GM12878 (cell line): ENCODE measurements at regions of chr1 and their contacts with region 1.

Region 1: DNA sequence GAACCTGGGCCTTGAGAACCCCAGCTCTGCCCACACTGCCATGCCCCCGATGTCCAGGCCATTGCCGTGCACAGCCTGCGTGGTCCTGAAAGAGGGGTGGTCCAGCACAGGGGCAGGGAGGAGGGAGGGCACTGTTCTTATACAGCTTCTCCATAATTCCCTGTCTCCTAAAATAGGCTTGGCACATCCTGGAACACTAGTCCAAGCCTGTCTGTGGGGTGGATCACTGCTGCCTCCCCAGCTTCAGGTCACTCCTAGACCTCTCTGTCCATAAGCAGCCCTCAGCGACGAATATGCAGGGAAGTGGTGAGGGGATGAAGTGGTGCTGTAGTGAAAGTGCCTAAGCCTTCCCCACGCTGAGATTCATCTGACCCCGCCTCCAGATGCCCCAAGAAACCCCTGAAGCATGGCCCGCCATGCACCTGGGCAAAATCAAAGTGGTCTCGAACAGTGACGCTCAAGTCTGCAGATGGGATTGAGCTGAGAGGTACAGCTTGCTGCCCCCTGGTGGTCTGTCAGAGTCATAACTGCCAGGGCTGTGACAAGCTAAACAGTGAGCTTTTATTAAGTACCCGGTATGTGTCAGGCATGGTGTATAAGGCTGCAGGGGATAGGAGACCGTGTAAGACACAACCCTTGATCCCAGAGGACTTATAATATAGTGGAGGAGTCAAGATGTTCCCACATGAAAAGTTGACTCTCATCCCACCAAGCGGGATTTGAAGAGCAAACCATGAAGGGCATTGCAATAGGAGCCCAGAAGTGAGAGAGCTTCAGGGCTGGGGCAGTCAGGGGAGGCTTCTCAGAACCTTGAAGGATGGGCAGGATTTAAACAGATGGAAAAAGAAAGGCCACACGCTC is 66.6 kb downstream of the FAM163A start:
- DNase-seq: peak; percentile 26
- ATAC-seq: peak; percentile 75
- H3K4me3 ChIP-seq: no peak overlapping the region
- H3K27ac ChIP-seq: no peak overlapping the region
- H3K4me1 ChIP-seq: peaks cover 3% of the 10 kb centered on the region; the same call in 1 of the 2 replicates
- H3K27me3 ChIP-seq: peaks cover 0 to 4% of the 10 kb centered on the region in 2 experiments; a peak in 2 of 4 replicates
- CTCF ChIP-seq: peak; percentile 80 to 94 (median 89)
- EP300 ChIP-seq: no peak
- POLR2A ChIP-seq: no peak
- RAD21 ChIP-seq: peak; percentile 73

Region 2: DNA sequence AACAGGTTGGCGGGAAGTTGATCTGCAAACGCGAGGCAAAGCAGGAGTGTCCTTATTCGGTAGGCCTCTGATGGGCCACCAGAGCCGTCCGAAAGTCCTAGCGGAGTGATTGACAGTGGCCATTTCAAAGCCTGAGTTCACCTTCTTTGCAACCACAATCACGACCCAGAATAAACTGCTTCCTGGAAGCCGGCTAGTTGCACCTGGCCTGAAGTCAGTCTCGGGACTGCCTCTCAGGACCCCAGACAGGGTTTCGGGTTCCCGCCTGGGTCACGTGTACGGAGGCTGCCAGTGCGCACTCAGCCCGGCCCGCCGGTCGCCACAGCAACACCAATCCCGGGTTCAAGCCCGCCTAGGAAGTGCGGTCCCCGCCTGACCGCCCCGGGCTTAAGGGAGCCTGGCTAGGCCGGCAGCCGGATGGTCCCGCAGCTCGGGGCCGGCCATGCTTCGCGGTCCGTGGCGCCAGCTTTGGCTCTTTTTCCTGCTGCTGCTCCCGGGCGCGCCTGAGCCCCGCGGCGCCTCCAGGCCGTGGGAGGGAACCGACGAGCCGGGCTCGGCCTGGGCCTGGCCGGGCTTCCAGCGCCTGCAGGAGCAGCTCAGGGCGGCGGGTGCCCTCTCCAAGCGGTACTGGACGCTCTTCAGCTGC is 727.9 kb before region 1 on chr1 and contains the start of gene TOR3A:
- CTCF ChIA-PET with region 1: interaction called, 8 read pairs
- POLR2A ChIA-PET with region 1: no interaction called
- RAD21 ChIA-PET with region 1: interaction called, 6 read pairs
- SMC1A ChIA-PET with region 1: interaction called, 3 read pairs
- in situ Hi-C with region 1: loop called (anchors 25 kb)
- intact Hi-C with region 1: no loop called
- DNase-seq: peak; percentile 81
- ATAC-seq: peak; percentile 90
- H3K4me3 ChIP-seq: peak within 1 kb of the TSS; percentile 95
- H3K27ac ChIP-seq: peak within 1 kb of the TSS; percentile 96
- H3K4me1 ChIP-seq: peaks cover 16% of the 10 kb centered on the region
- H3K27me3 ChIP-seq: no peaks in the 10 kb centered on the region
- CTCF ChIP-seq: no peak
- EP300 ChIP-seq: peak in 1 of 2 experiments; percentile 52; a peak in 1 of 4 replicates
- POLR2A ChIP-seq: peak; percentile 98
- RAD21 ChIP-seq: no peak
- polyA plus RNA-seq, gene TOR3A: 8.6 to 14.5 TPM

Region 3: DNA sequence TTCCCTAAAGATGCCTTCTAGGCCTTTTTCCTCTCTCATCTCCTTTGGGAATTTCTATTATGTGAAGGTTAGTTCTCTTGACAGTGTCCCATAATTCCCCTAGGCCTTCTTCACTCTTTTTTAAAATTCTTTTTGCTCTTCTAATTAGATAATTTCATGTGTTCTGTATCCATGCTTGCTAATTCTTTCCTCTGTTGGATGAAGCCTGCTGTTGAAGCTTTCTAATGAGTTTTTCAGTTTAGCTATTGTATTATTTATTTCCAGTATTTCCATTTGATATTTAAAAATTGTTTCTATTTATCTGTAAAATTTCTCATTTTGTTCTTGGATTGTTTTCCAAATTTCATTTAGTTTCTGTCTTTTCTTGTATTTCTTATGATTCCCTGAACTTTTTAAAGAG is 95.1 kb before region 1 on chr1:
- CTCF ChIA-PET with region 1: interaction called, 938 read pairs
- POLR2A ChIA-PET with region 1: interaction called, 8 read pairs
- RAD21 ChIA-PET with region 1: interaction called, 474 read pairs
- SMC1A ChIA-PET with region 1: interaction called, 62 read pairs
- in situ Hi-C with region 1: loop called (anchors 5 kb)
- intact Hi-C with region 1: no loop called
- DNase-seq: no peak
- ATAC-seq: no peak
- H3K4me3 ChIP-seq: no peak overlapping the region
- H3K27ac ChIP-seq: no peak overlapping the region
- H3K4me1 ChIP-seq: no peaks in the 10 kb centered on the region
- H3K27me3 ChIP-seq: no peaks in the 10 kb centered on the region
- CTCF ChIP-seq: no peak
- EP300 ChIP-seq: no peak
- POLR2A ChIP-seq: no peak
- RAD21 ChIP-seq: no peak

Region 4: GRCh38 chr1:179742717-179743678 is 66.7 kb before region 1 on chr1 and contains the start of gene FAM163A:
- CTCF ChIA-PET with region 1: interaction called, 11 read pairs
- POLR2A ChIA-PET with region 1: no interaction called
- RAD21 ChIA-PET with region 1: interaction called, 3 read pairs
- SMC1A ChIA-PET with region 1: no interaction called
- in situ Hi-C with region 1: no loop called
- intact Hi-C with region 1: no loop called
- DNase-seq: no peak
- ATAC-seq: no peak; the same call in 1 of the 3 replicates
- H3K4me3 ChIP-seq: no peak within 1 kb of the TSS
- H3K27ac ChIP-seq: no peak within 1 kb of the TSS
- H3K4me1 ChIP-seq: no peaks in the 10 kb centered on the region
- H3K27me3 ChIP-seq: peaks cover 6% of the 10 kb centered on the region in 2 experiments; a peak in 3 of 4 replicates
- CTCF ChIP-seq: no peak
- EP300 ChIP-seq: no peak
- POLR2A ChIP-seq: no peak
- RAD21 ChIP-seq: no peak
- polyA plus RNA-seq, gene FAM163A: not detected

Region 5: DNA sequence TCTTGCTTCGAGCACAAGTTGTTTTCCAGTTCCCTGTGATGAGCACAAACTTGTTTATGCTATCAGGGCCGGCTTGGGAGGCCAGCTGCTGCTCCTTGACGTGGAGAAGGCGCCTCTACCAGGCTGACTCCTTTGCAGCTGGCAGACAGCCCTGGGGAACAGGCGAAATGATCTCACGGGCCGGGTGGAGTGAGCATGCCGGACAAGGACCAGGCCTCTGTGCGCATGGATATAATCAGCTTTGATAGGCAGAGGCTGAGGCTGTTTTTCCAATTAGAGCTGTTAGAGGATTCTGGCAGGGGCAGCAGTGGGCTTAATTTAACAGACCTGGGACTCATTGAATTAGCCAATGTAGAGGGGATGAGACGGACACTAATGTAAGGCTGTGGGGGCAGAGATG is 27.8 kb before region 1 on chr1:
- CTCF ChIA-PET with region 1: interaction called, 12 read pairs
- POLR2A ChIA-PET with region 1: no interaction called
- RAD21 ChIA-PET with region 1: interaction called, 3 read pairs
- SMC1A ChIA-PET with region 1: interaction called, 4 read pairs
- in situ Hi-C with region 1: no loop called
- intact Hi-C with region 1: no loop called
- DNase-seq: no peak
- ATAC-seq: no peak
- H3K4me3 ChIP-seq: no peak overlapping the region
- H3K27ac ChIP-seq: no peak overlapping the region
- H3K4me1 ChIP-seq: no peaks in the 10 kb centered on the region
- H3K27me3 ChIP-seq: peaks cover 0 to 1% of the 10 kb centered on the region in 2 experiments; a peak in 1 of 4 replicates
- CTCF ChIP-seq: no peak
- EP300 ChIP-seq: no peak
- POLR2A ChIP-seq: no peak
- RAD21 ChIP-seq: no peak

Region 6: DNA sequence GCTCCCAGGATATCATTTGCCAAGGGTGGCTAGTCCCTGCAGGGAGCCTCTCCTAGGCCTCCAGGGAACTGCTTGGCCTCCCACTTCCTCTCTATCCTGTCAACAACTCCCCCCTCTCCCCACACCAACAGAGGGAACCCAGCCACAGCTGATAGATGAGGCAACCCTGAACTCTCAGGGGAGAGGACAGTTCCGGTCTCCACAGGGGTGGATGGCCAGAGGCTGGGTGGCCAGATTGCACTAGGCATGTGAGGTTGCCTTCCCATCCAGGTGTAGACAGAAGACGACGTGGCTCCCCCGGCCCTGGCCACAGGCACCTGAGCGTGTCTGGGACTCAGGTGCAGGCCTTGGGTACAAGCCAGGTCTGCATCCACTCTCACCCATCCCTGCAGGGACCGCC is 14.5 kb after region 1 on chr1:
- CTCF ChIA-PET with region 1: interaction called, 84 read pairs
- POLR2A ChIA-PET with region 1: no interaction called
- RAD21 ChIA-PET with region 1: interaction called, 10 read pairs
- SMC1A ChIA-PET with region 1: interaction called, 16 read pairs
- in situ Hi-C with region 1: no loop called
- intact Hi-C with region 1: no loop called
- DNase-seq: no peak
- ATAC-seq: no peak
- H3K4me3 ChIP-seq: no peak overlapping the region
- H3K27ac ChIP-seq: no peak overlapping the region
- H3K4me1 ChIP-seq: no peaks in the 10 kb centered on the region
- H3K27me3 ChIP-seq: no peaks in the 10 kb centered on the region; a peak in 1 of 4 replicates
- CTCF ChIP-seq: no peak
- EP300 ChIP-seq: no peak
- POLR2A ChIP-seq: no peak
- RAD21 ChIP-seq: no peak

Region 7: DNA sequence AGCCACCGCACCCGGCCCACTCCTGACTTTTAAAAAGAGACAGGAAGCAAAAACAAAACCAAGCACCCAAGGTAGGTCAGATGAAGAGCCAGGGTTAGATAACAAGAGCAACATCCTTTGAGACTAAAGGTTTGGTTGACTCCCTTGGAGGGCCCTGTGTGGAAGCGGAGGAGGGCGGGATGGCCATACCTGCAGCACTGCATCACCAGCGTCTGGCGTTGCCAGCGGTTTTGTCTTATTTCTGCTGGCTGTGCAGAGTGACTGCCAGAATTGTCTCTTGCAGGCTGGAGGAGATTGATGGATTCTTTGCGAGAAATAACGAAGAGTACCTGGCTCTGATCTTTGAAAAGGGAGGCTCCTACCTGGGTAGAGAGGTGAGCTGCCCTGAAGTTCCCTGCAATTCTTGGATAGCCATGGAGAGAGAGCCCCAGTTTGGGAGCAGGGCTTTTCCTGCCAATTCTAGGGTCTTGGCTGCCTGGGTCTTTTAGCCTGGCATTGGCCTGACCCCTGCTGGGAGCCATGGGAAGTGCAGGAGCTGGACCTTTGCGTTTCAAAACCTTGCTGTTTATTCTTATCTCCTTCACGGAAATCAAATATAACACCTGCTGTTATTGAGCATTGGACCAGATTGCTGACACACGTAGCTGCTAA is 368.9 kb after region 1 on chr1:
- CTCF ChIA-PET with region 1: interaction called, 39 read pairs
- POLR2A ChIA-PET with region 1: no interaction called
- RAD21 ChIA-PET with region 1: interaction called, 41 read pairs
- SMC1A ChIA-PET with region 1: interaction called, 17 read pairs
- in situ Hi-C with region 1: no loop called
- intact Hi-C with region 1: no loop called
- DNase-seq: no peak
- ATAC-seq: peak; percentile 82
- H3K4me3 ChIP-seq: no peak overlapping the region
- H3K27ac ChIP-seq: no peak overlapping the region
- H3K4me1 ChIP-seq: no peaks in the 10 kb centered on the region
- H3K27me3 ChIP-seq: no peaks in the 10 kb centered on the region
- CTCF ChIP-seq: peak; percentile 97 to 99 (median 98)
- EP300 ChIP-seq: no peak
- POLR2A ChIP-seq: no peak
- RAD21 ChIP-seq: peak; percentile 97